ENCODE measurements at regions of chr7 and their contacts with region 1.

Region 1: DNA sequence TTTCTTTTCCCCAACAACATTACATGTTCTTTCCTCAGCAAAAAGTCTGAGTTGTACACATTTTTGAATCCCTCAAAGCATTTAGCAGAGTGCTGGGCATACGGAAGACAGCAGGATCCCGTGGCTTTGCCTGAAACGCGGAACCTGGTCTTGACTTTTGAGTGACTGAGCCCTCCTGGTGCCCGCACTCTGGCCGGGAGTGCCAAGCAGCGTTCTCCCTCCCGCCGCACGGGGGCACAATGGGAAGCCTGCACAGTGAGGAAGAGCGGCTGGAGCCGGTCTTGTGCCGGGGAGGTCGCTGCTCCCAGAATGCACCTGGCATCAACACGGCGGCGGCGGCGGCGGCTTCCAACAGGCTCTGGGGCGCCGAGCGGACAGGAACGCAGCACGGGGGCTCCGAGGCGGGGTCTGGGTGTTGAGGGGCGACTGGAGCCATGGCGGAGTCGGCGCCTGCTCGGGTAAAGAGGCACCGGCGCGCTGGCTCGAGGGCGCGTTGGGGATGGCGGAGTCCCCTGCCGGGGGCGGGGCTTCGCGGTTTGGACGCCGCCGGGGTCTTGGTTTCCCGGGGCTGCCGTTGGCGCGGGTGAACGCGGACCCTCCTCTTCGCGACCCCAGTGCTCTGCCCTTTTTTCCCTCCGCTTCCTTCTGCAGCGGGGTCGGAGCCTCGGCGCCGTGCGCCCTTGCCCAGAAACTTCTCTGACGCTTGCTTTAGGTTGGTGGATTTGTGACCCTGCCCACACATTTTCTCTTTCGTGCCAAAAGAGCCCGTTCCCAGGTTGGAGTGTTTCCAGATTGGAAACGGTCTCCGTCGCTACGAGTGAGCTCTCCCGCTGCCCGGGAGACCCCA is at the start of gene ZNF212:
- DNase-seq: peak; percentile 95
- H3K4me3 ChIP-seq: peak within 1 kb of the TSS; percentile 96
- H3K27ac ChIP-seq: peak within 1 kb of the TSS; percentile 51
- H3K4me1 ChIP-seq: peaks cover 7% of the 10 kb centered on the region
- H3K27me3 ChIP-seq: no peaks in the 10 kb centered on the region
- CTCF ChIP-seq: peak; percentile 80
- total RNA-seq, gene ZNF212: 9.8 to 10.4 TPM

Region 2: GRCh38 chr7:149195180-149196150 is 44.1 kb before region 1 on chr7 and contains the start of gene ZNF282:
- intact Hi-C with region 1: loop called (anchors 5 kb)
- DNase-seq: peak; percentile 92
- H3K4me3 ChIP-seq: peak within 1 kb of the TSS; percentile 73
- H3K27ac ChIP-seq: peak within 1 kb of the TSS; percentile 97
- H3K4me1 ChIP-seq: peaks cover 7% of the 10 kb centered on the region
- H3K27me3 ChIP-seq: no peaks in the 10 kb centered on the region
- CTCF ChIP-seq: peak; percentile 58
- total RNA-seq, gene ZNF282: 24.1 to 31.5 TPM

Region 3: GRCh38 chr7:149284850-149285626 is 45.5 kb after region 1 on chr7:
- intact Hi-C with region 1: no loop called
- DNase-seq: peak; percentile 99
- H3K4me3 ChIP-seq: peak overlapping the region; percentile 52
- H3K27ac ChIP-seq: no peak overlapping the region
- H3K4me1 ChIP-seq: no peaks in the 10 kb centered on the region
- H3K27me3 ChIP-seq: no peaks in the 10 kb centered on the region
- CTCF ChIP-seq: no peak